WTC11 (cell line): ENCODE measurements at regions of chr22 and their contacts with region 1.

Region 1: GRCh38 chr22:25772288-25772687 is 30.3 kb downstream of the MYO18B start:
- DNase-seq: no peak
- ATAC-seq: no peak
- H3K4me3 Mint-ChIP-seq: no peak overlapping the region
- H3K27ac Mint-ChIP-seq: no peak overlapping the region
- H3K4me1 Mint-ChIP-seq: peaks cover 4% of the 10 kb centered on the region
- H3K27me3 Mint-ChIP-seq: peaks cover 2% of the 10 kb centered on the region
- CTCF ChIP-seq: no peak

Region 2: DNA sequence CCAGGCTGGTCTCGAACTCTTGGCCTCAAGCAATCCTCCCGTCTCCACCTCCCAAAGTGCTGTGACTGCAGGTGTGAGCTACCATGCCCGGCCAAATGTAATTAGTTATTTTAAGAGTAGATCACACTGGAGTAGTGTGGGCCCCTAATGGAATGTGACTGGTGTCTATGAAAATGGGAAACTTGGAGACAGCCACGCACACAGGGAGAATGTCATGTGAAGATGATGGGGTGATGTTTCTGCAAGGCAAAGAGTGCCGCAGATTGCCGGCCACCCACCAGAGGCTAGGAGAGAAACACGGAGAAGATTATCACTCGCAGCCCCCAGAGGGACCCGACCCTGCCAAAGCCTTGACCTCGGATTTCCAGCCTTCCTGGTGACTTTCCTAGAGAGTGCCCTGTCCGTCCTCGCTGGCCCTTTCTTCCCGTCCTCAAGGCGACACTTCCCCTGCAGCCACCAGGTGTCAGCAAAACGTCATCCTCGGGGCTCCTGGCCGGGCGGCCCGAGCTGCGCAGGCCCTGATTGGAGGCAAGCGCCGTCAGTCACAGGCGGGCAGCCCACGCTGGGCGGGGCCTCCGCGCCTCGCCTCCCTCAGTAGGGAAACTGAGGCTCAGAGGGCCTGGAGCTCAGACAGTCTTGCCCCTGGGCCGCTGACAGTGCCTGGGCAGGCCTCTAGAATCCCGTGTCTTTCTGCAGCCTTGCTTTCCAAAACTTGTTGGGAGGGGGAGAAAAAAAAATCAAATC is 536.6 kb before region 1 on chr22:
- CTCF ChIA-PET with region 1: interaction called, 19 read pairs
- POLR2A ChIA-PET with region 1: no interaction called
- DNase-seq: peak; percentile 93
- ATAC-seq: peak; percentile 98
- H3K4me3 Mint-ChIP-seq: no peak overlapping the region
- H3K27ac Mint-ChIP-seq: no peak overlapping the region
- H3K4me1 Mint-ChIP-seq: no peaks in the 10 kb centered on the region; the same call in 1 of the 2 replicates
- H3K27me3 Mint-ChIP-seq: peaks cover 2% of the 10 kb centered on the region; the same call in 1 of the 2 replicates
- CTCF ChIP-seq: peak; percentile 69

Region 3: GRCh38 chr22:25546751-25547150 is 225.5 kb before region 1 on chr22:
- CTCF ChIA-PET with region 1: interaction called, 32 read pairs
- POLR2A ChIA-PET with region 1: no interaction called
- DNase-seq: no peak
- ATAC-seq: no peak
- H3K4me3 Mint-ChIP-seq: no peak overlapping the region
- H3K27ac Mint-ChIP-seq: no peak overlapping the region
- H3K4me1 Mint-ChIP-seq: peaks cover 5% of the 10 kb centered on the region
- H3K27me3 Mint-ChIP-seq: no peaks in the 10 kb centered on the region; the same call in none of the 2 replicates
- CTCF ChIP-seq: no peak

Region 4: GRCh38 chr22:25795478-25795877 is 23.2 kb after region 1 on chr22:
- CTCF ChIA-PET with region 1: interaction called, 10 read pairs
- POLR2A ChIA-PET with region 1: no interaction called
- DNase-seq: no peak
- ATAC-seq: no peak
- H3K4me3 Mint-ChIP-seq: no peak overlapping the region
- H3K27ac Mint-ChIP-seq: no peak overlapping the region
- H3K4me1 Mint-ChIP-seq: no peaks in the 10 kb centered on the region
- H3K27me3 Mint-ChIP-seq: peaks cover 3% of the 10 kb centered on the region; the same call in 1 of the 2 replicates
- CTCF ChIP-seq: no peak

Region 5: DNA sequence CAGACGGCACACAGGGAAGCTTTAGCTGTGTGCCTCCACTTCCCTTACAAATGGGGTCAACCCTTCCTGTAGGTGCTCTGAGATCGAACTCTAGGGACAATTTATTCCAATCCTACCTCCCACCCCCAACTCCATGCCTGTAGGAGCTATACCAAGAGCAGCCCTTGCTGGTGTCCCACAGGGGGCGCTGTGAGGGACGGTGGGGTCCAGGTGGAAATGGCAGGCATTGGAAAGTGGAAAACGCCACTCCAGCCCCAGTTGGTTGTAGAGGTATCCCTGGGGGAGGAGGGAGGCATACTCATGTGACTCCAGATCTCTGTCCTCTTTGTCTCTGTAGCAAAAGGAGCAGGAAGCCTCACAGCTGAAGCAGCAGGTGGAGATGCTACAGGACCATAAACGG is 131.0 kb after region 1 on chr22:
- CTCF ChIA-PET with region 1: interaction called, 12 read pairs
- POLR2A ChIA-PET with region 1: no interaction called
- DNase-seq: peak; percentile 85
- ATAC-seq: peak; percentile 94
- H3K4me3 Mint-ChIP-seq: no peak overlapping the region
- H3K27ac Mint-ChIP-seq: 0 out of 2 replicates have a peak overlapping the region, but pooled peaks have one; percentile 43
- H3K4me1 Mint-ChIP-seq: peaks cover 13% of the 10 kb centered on the region
- H3K27me3 Mint-ChIP-seq: peaks cover 3% of the 10 kb centered on the region
- CTCF ChIP-seq: peak; percentile 88